ENCODE measurements at regions of chr14 and their contacts with region 1.

Region 1: GRCh38 chr14:20019257-20019865 is at the start of gene OR4K14:
- DNase-seq: no peak
- H3K4me3 ChIP-seq: no peak within 1 kb of the TSS
- H3K27ac ChIP-seq: no peak within 1 kb of the TSS
- H3K4me1 ChIP-seq: no peaks in the 10 kb centered on the region
- H3K27me3 ChIP-seq: no peaks in the 10 kb centered on the region
- CTCF ChIP-seq: no peak
- total RNA-seq, gene OR4K14: not detected in 2 replicates

Region 2: GRCh38 chr14:19947413-19948090 is 71.8 kb before region 1 on chr14:
- CTCF ChIA-PET with region 1: no interaction called
- POLR2A ChIA-PET with region 1: no interaction called
- intact Hi-C with region 1: no loop called
- DNase-seq: no peak
- H3K4me3 ChIP-seq: no peak overlapping the region; the same call in 1 of the 2 replicates
- H3K27ac ChIP-seq: no peak overlapping the region
- H3K4me1 ChIP-seq: no peaks in the 10 kb centered on the region
- H3K27me3 ChIP-seq: no peaks in the 10 kb centered on the region
- CTCF ChIP-seq: no peak

Region 3: GRCh38 chr14:20002319-20002718 is 17.0 kb before region 1 on chr14:
- CTCF ChIA-PET with region 1: no interaction called
- POLR2A ChIA-PET with region 1: no interaction called
- intact Hi-C with region 1: no loop called
- DNase-seq: no peak
- H3K4me3 ChIP-seq: no peak overlapping the region
- H3K27ac ChIP-seq: no peak overlapping the region
- H3K4me1 ChIP-seq: no peaks in the 10 kb centered on the region
- H3K27me3 ChIP-seq: no peaks in the 10 kb centered on the region
- CTCF ChIP-seq: no peak

Region 4: GRCh38 chr14:20031058-20031457 is 11.7 kb after region 1 on chr14:
- CTCF ChIA-PET with region 1: no interaction called
- POLR2A ChIA-PET with region 1: no interaction called
- intact Hi-C with region 1: loop called (anchors 2 kb)
- DNase-seq: no peak
- H3K4me3 ChIP-seq: no peak overlapping the region
- H3K27ac ChIP-seq: no peak overlapping the region
- H3K4me1 ChIP-seq: no peaks in the 10 kb centered on the region
- H3K27me3 ChIP-seq: no peaks in the 10 kb centered on the region
- CTCF ChIP-seq: no peak

Region 5: DNA sequence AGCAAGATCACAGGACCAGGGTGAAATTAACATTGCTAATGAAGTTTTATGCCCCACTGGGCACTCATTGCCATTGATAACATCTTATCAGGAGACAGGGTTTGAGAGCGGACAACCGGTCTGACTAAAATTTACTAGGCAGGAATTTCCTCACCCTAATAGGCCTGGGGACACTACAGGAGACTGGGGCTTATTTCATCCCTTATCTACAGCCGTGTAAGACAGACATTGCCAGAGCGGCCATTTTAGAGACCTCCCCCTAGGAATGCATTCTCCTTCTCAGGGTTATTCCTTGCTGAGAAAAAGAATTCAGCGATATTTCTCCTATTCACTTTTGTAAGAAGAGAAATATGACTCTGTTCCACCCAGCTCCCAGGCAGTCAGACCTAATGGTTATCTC is 99.4 kb after region 1 on chr14:
- CTCF ChIA-PET with region 1: no interaction called
- POLR2A ChIA-PET with region 1: no interaction called
- intact Hi-C with region 1: no loop called
- DNase-seq: no peak
- H3K4me3 ChIP-seq: no peak overlapping the region
- H3K27ac ChIP-seq: no peak overlapping the region
- H3K4me1 ChIP-seq: no peaks in the 10 kb centered on the region
- H3K27me3 ChIP-seq: no peaks in the 10 kb centered on the region
- CTCF ChIP-seq: no peak

Region 6: DNA sequence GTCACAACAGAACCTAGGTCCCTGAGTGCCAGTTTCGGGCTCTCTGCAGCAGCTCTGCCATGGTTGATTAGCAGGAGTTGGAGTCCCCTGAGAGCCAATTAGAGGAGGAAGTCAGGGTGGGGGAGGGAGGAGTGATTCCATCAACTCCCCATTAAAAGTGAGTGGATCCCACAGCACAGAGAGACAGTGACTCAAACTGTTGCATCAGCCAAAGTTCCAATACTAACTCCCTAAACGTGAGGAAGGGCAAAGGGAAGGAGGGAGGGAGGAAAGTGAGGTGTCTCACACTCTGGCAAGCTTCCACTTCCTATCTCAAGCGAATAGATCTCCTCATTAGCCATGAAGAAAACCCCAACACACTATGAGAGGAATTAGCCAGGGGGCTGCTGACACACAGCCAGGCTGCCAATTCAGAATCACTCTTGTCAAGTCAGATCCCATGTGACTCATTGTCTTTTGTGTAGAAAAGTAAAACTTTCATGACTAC is 243.3 kb after region 1 on chr14:
- CTCF ChIA-PET with region 1: no interaction called
- POLR2A ChIA-PET with region 1: no interaction called
- intact Hi-C with region 1: no loop called
- DNase-seq: peak in 1 of 2 experiments; percentile 38
- H3K4me3 ChIP-seq: no peak overlapping the region
- H3K27ac ChIP-seq: peak overlapping the region; percentile 55
- H3K4me1 ChIP-seq: peaks cover 12% of the 10 kb centered on the region; the same call in 1 of the 2 replicates
- H3K27me3 ChIP-seq: no peaks in the 10 kb centered on the region
- CTCF ChIP-seq: no peak

Measured in PC-9 (cell line).